ENCODE measurements at regions of chr16 and their contacts with region 1.

Region 1: GRCh38 chr16:68396481-68396880 is 51.8 kb downstream of the SMPD3 start:
- DNase-seq: peak in 8 of 9 experiments; percentile 32 to 74 (median 60)
- ATAC-seq: peak; percentile 82
- H3K4me3 ChIP-seq: no peak overlapping the region
- H3K4me3 Mint-ChIP-seq: no peak overlapping the region
- H3K27ac ChIP-seq: no peak overlapping the region
- H3K27ac Mint-ChIP-seq: no peak overlapping the region
- H3K4me1 ChIP-seq: peaks cover 18% of the 10 kb centered on the region
- H3K4me1 Mint-ChIP-seq: peaks cover 17% of the 10 kb centered on the region
- H3K27me3 ChIP-seq: no peaks in the 10 kb centered on the region
- H3K27me3 Mint-ChIP-seq: no peaks in the 10 kb centered on the region
- CTCF ChIP-seq: peak; percentile 75

Region 2: DNA sequence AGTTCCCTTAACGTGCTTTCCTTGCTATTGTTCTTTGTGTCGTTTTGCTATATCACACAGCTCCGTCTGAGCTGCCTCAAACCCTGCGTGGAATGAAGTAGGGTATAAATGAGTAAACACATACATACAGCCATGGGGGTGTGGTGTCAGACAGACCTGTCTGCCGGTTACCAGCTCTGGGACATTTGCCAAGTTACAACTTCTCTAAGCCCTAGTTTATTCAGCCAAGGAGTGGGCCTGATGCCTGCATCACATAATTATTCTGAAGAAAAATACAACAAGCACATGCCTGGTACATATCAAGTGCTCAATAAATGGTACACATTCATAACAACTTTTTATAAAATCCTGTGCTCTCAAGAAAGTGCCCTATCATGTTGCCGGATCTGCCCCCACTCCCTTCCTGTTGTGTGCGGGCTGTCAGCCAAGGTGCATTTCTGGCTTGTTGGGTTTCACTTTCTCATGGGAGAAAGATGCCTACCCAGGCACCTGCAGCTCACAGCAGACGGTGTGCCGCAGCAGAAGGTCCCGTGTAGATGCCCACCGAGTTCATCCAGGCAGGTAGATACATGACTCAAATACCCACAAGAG is 21.3 kb after region 1 on chr16:
- CTCF ChIA-PET with region 1: interaction called, 37 read pairs
- POLR2A ChIA-PET with region 1: interaction called, 4 read pairs
- intact Hi-C with region 1: loop called in 1 of 2 experiments (anchors 1 kb)
- DNase-seq: peak; percentile 50 to 90 (median 83)
- ATAC-seq: peak; percentile 90
- H3K4me3 ChIP-seq: peak overlapping the region in 1 of 2 experiments; percentile 19
- H3K4me3 Mint-ChIP-seq: peak overlapping the region; percentile 80
- H3K27ac ChIP-seq: peak overlapping the region; percentile 33 to 89
- H3K27ac Mint-ChIP-seq: peak overlapping the region; percentile 98
- H3K4me1 ChIP-seq: peaks cover 37% of the 10 kb centered on the region
- H3K4me1 Mint-ChIP-seq: peaks cover 42% of the 10 kb centered on the region
- H3K27me3 ChIP-seq: no peaks in the 10 kb centered on the region
- H3K27me3 Mint-ChIP-seq: no peaks in the 10 kb centered on the region
- CTCF ChIP-seq: no peak

Region 3: DNA sequence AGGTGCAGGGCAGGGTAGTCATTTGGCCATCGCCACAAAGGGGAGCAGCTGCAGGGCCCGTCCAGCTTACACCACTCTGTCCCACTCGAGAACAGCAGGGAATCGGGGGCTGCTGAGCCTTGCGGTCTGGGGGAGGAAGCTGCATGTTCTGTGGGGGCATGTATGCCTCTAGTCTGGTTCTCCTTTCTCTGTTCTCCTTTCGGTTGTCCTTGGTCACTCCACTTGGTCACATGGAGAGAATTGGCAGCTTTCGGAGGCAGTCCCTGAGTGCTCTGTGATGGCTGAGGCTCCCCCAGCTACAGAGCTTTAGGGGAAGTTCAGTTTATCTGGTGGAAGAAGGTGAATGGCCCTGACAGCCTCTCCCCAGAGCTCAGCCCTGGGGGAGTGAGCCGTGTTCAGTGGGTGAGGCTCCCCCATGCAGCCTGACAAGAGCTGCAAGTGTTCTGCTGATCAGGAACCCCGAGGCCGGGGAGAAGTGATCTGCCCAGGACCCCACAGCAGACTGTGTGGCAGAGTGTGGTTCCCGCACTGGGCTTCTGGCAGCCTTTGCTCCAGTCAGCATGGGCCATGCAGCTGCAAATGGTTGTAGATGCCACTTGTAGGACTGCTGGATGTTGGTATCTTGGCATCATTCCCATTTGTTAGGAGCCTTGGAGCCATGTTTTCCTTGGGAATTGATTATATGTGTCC is 74.1 kb after region 1 on chr16:
- CTCF ChIA-PET with region 1: interaction called, 24 read pairs
- POLR2A ChIA-PET with region 1: interaction called, 5 read pairs
- intact Hi-C with region 1: no loop called
- DNase-seq: peak in 5 of 9 experiments; percentile 5 to 60 (median 22)
- ATAC-seq: peak; percentile 59
- H3K4me3 ChIP-seq: peak overlapping the region; percentile 50 to 59
- H3K4me3 Mint-ChIP-seq: peak overlapping the region; percentile 86
- H3K27ac ChIP-seq: peak overlapping the region; percentile 10 to 70
- H3K27ac Mint-ChIP-seq: peak overlapping the region; percentile 90
- H3K4me1 ChIP-seq: peaks cover 36% of the 10 kb centered on the region
- H3K4me1 Mint-ChIP-seq: peaks cover 46% of the 10 kb centered on the region
- H3K27me3 ChIP-seq: no peaks in the 10 kb centered on the region
- H3K27me3 Mint-ChIP-seq: no peaks in the 10 kb centered on the region
- CTCF ChIP-seq: no peak

Region 4: DNA sequence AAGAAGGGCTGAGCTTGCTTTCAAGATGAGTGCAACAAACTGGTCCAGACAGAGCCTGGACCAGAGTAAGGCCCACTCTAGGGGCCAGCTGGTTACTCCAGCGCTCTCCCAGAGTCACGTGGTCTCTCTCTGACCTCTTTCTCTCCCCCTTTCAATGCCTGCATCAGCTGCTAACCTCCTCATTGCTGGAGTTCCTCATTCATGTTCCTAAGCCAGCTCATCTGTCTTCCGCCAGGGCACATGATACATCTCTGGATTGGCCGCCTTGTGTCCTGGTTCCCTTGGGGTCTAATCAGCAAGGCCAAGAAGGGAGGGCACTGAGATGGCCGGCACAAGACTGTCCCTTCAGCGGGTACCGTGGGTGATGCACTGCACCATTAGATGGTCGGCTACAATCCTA is 115.7 kb after region 1 on chr16:
- CTCF ChIA-PET with region 1: interaction called, 360 read pairs
- POLR2A ChIA-PET with region 1: no interaction called
- intact Hi-C with region 1: loop called in 1 of 2 experiments (anchors 1 kb)
- DNase-seq: no peak
- ATAC-seq: no peak
- H3K4me3 ChIP-seq: no peak overlapping the region
- H3K4me3 Mint-ChIP-seq: no peak overlapping the region
- H3K27ac ChIP-seq: no peak overlapping the region
- H3K27ac Mint-ChIP-seq: no peak overlapping the region
- H3K4me1 ChIP-seq: peaks cover 6% of the 10 kb centered on the region
- H3K4me1 Mint-ChIP-seq: peaks cover 2% of the 10 kb centered on the region
- H3K27me3 ChIP-seq: no peaks in the 10 kb centered on the region
- H3K27me3 Mint-ChIP-seq: no peaks in the 10 kb centered on the region
- CTCF ChIP-seq: no peak

Region 5: DNA sequence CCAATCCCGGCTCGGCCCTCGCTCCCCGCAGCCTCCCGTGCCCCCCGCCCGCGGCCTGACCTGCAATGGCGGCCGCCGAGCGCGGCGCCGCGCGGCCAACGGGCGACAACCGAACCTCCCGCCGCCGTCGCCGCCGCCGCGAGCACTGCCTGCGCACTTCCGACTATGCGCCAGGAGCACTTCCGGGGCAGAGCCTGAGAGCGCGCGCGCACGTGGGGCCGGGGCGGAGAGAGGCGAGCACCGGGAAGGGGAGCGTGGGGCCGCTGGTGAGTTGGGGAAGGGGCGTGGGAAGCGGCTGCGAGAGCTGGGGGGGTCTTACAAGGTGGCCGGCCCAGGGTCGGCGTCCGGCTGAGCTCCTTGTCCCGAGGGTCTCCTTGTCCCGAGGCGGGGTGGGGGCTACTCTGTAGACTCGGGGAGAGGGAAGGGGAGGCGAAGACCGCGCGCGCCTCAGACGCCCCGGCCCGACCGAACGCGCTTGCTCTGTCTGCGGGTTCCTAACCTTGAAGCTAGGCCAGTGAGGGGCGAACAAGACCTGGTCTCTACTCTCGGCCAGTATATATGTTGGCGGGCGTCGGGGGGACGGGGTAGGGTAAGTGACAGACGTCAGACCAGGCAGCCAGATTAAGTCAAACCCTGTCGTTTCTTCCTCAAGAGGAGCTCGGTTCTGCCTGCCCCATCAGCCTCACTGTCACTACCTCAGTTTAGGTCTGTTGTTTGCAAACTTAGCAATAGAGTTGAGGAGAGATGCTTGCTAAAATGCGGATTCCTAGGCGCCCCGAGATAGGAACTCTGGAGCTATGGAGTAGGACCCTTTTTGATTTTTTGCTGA is 736.2 kb after region 1 on chr16 and contains the starts of genes CHTF8 and UTP4:
- CTCF ChIA-PET with region 1: no interaction called
- POLR2A ChIA-PET with region 1: no interaction called
- intact Hi-C with region 1: loop called in 1 of 2 experiments (anchors 10 kb)
- DNase-seq: peak; percentile 69 to 91 (median 87)
- ATAC-seq: peak; percentile 85
- H3K4me3 ChIP-seq: peak within 1 kb of the TSS; percentile 92 to 98
- H3K4me3 Mint-ChIP-seq: peak within 1 kb of the TSS; percentile 94
- H3K27ac ChIP-seq: peak within 1 kb of the TSS; percentile 77 to 90
- H3K27ac Mint-ChIP-seq: peak within 1 kb of the TSS; percentile 95
- H3K4me1 ChIP-seq: peaks cover 26% of the 10 kb centered on the region
- H3K4me1 Mint-ChIP-seq: peaks cover 65% of the 10 kb centered on the region
- H3K27me3 ChIP-seq: no peaks in the 10 kb centered on the region
- H3K27me3 Mint-ChIP-seq: no peaks in the 10 kb centered on the region
- CTCF ChIP-seq: no peak
- total RNA-seq, gene CHTF8: 26.2 to 28.8 TPM
- total RNA-seq, gene UTP4: 45.8 to 48.7 TPM

Measured in CD8-positive, alpha-beta T cell (primary cell).